Activated CD8-positive, alpha-beta T cell treated with anti-CD3 and anti-CD28 coated beads, Interleukin-2, amount 10 ng/mL, durations not matched to agents 7 days and 5 days (primary cell): ENCODE measurements at regions of chr7 and their contacts with region 1.

Region 1: GRCh38 chr7:127708788-127709187 is 56.8 kb downstream of the SND1 start:
- DNase-seq: peak; percentile 85
- ATAC-seq: peak; percentile 84
- H3K4me3 Mint-ChIP-seq: no peak overlapping the region
- H3K27ac Mint-ChIP-seq: no peak overlapping the region
- H3K4me1 Mint-ChIP-seq: no peaks in the 10 kb centered on the region
- H3K27me3 Mint-ChIP-seq: no peaks in the 10 kb centered on the region

Region 2: GRCh38 chr7:127692200-127692599 is 16.6 kb before region 1 on chr7:
- CTCF ChIA-PET with region 1: interaction called, 16 read pairs
- POLR2A ChIA-PET with region 1: no interaction called
- DNase-seq: no peak
- ATAC-seq: no peak
- H3K4me3 Mint-ChIP-seq: no peak overlapping the region
- H3K27ac Mint-ChIP-seq: no peak overlapping the region
- H3K4me1 Mint-ChIP-seq: peaks cover 3% of the 10 kb centered on the region
- H3K27me3 Mint-ChIP-seq: no peaks in the 10 kb centered on the region

Region 3: GRCh38 chr7:127726476-127726875 is 17.7 kb after region 1 on chr7:
- CTCF ChIA-PET with region 1: interaction called, 22 read pairs
- POLR2A ChIA-PET with region 1: no interaction called
- DNase-seq: no peak
- ATAC-seq: no peak
- H3K4me3 Mint-ChIP-seq: no peak overlapping the region
- H3K27ac Mint-ChIP-seq: no peak overlapping the region
- H3K4me1 Mint-ChIP-seq: no peaks in the 10 kb centered on the region
- H3K27me3 Mint-ChIP-seq: no peaks in the 10 kb centered on the region

Region 4: DNA sequence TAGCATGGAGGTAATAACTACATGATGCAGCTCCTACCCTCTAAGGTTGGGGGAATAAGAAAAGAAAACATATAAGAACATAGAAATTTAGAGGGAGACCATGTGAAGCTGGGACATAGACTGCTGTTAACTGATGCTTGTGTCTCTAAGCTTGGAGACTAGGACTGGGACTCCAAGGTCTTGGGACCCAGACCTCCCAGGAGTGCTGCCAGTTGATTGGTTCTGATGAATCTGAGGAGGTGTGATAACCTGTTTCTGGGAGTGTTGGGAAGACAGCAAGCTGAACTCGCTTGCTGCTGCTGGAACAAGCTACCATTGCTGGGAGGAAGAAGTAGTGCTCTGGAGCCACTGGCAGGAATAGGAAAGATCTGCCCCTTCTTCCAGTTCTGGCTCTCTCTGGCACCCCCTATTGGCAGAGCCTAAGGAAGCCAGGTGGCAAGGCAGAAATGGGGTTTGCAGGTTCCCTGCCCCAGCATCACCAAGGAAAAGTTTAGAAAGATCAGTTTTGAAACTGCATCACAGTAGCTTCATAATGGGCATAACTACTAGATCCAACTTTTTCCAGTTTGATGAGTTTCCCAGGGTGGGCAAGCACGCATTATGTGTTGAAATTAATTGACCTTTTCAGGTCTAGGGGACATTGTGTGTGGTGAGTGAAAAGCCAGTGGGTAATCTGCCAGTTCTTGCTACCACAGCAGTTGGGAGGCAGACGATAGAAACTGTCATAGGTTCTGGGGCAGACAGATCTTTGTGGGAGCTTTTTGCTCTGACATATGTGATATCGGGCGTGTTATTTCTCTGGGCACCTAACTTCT is 83.9 kb after region 1 on chr7:
- CTCF ChIA-PET with region 1: interaction called, 25 read pairs
- POLR2A ChIA-PET with region 1: no interaction called
- DNase-seq: peak; percentile 58
- ATAC-seq: peak; percentile 65
- H3K4me3 Mint-ChIP-seq: no peak overlapping the region
- H3K27ac Mint-ChIP-seq: no peak overlapping the region
- H3K4me1 Mint-ChIP-seq: peaks cover 5% of the 10 kb centered on the region
- H3K27me3 Mint-ChIP-seq: no peaks in the 10 kb centered on the region

Region 5: GRCh38 chr7:128108641-128109423 is 400.0 kb after region 1 on chr7:
- CTCF ChIA-PET with region 1: interaction called, 10 read pairs
- POLR2A ChIA-PET with region 1: no interaction called
- DNase-seq: peak; percentile 57
- ATAC-seq: peak; percentile 78
- H3K4me3 Mint-ChIP-seq: peak overlapping the region; percentile 55
- H3K27ac Mint-ChIP-seq: peak overlapping the region; percentile 94
- H3K4me1 Mint-ChIP-seq: peaks cover 80% of the 10 kb centered on the region
- H3K27me3 Mint-ChIP-seq: no peaks in the 10 kb centered on the region

Region 6: GRCh38 chr7:128209229-128210035 is 500.6 kb after region 1 on chr7:
- CTCF ChIA-PET with region 1: interaction called, 166 read pairs
- POLR2A ChIA-PET with region 1: interaction called, 5 read pairs
- DNase-seq: peak; percentile 74
- ATAC-seq: peak; percentile 84
- H3K4me3 Mint-ChIP-seq: no peak overlapping the region
- H3K27ac Mint-ChIP-seq: no peak overlapping the region
- H3K4me1 Mint-ChIP-seq: no peaks in the 10 kb centered on the region
- H3K27me3 Mint-ChIP-seq: peaks cover 14% of the 10 kb centered on the region